ENCODE measurements at regions of chr4 and their contacts with region 1.

Region 1: DNA sequence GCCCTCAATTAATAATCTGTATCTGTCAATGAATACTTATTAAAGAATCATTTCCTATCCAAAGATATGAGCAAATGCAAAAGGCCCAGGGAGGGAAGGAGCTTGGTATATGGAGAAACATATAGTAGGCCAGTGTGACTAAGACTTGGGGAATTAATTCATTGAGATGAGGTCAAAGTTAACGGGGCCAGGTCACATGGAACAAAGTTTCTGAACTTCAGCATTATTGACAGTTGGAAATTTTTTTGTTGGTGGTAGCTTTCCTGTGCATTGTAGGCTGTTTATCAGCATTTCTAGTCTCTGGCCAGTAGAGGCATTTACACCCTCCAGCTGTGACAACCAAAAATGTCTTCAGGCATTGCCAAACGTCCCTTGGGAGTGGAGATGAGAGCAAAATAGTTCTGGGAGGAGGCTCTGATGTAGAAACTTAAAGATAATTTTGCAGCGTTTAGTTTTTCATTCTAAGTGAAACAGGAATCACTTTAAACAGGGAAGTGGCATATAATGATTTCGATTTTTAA is 202.0 kb downstream of the SLC4A4 start:
- DNase-seq: no peak
- H3K4me3 ChIP-seq: no peak overlapping the region
- H3K27ac ChIP-seq: no peak overlapping the region
- H3K4me1 ChIP-seq: no peaks in the 10 kb centered on the region
- H3K27me3 ChIP-seq: no peaks in the 10 kb centered on the region
- CTCF ChIP-seq: no peak

Region 2: DNA sequence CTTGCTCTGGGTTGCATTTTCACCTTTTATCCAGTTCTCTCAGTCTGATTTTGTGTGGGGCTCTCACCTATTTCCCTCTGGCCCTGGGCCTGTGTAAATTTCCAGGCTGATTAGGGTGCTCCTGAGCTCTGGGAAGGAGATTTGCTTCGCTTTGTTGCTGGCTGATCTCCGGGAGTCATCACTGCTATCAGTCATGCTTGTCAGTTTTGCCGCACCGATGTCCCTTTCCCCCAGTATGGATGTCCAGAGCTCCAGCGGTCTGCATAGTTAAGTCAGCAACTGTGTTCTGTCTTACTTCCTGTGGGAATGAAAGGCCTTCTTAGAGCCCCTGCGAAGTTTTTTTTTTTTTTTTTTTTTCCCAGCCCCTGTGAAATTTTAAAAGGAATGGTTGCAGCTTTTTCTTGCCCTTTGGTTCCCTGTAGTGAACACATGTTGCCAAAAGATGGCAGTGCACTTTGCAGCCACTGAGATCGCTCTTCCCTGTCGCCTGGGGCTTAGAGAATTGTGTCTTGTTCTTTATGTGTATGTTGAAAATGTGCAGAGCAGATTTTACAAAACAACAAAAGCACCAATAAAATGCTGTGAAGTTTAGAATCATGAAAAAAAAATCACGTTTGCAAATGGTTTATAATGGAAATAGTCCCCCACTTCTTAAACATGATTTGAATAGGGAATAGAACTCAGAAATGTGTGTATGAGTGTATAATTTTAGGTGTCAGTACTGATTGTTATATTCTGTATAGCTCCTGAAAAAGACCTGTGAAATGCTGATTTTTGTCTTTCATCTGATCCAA is 311.1 kb before region 1 on chr4:
- CTCF ChIA-PET with region 1: interaction called, 16 read pairs
- dilution Hi-C with region 1: no loop called
- in situ Hi-C with region 1: no loop called
- intact Hi-C with region 1: no loop called
- DNase-seq: no peak
- H3K4me3 ChIP-seq: no peak overlapping the region
- H3K27ac ChIP-seq: no peak overlapping the region
- H3K4me1 ChIP-seq: no peaks in the 10 kb centered on the region
- H3K27me3 ChIP-seq: no peaks in the 10 kb centered on the region
- CTCF ChIP-seq: peak; percentile 60 to 80

Region 3: DNA sequence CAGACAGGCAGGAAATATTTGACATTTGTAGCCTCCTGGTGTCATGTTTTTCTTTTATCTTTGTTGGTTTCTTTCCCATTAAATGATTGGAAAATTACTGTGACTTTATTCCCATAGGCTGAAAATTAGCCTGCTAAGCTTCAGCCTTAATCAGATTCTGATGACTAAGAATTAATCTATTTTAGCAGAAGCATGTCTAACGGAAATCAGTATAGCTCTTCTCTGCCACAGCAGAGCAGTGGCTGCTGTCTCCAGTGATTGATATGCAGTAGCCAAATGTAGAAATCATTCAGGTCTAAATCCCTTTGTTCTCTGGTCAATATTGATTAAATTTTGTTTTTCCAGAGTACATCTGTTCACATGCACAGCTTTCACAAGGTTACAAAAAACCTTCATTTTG is 43.8 kb after region 1 on chr4:
- CTCF ChIA-PET with region 1: no interaction called
- dilution Hi-C with region 1: no loop called
- in situ Hi-C with region 1: no loop called
- intact Hi-C with region 1: no loop called
- DNase-seq: no peak
- H3K4me3 ChIP-seq: no peak overlapping the region
- H3K27ac ChIP-seq: no peak overlapping the region
- H3K4me1 ChIP-seq: no peaks in the 10 kb centered on the region
- H3K27me3 ChIP-seq: no peaks in the 10 kb centered on the region
- CTCF ChIP-seq: no peak

Measured in mammary epithelial cell (primary cell).